Caco-2 (cell line): ENCODE measurements at regions of chr2 and their contacts with region 1.

Region 1: DNA sequence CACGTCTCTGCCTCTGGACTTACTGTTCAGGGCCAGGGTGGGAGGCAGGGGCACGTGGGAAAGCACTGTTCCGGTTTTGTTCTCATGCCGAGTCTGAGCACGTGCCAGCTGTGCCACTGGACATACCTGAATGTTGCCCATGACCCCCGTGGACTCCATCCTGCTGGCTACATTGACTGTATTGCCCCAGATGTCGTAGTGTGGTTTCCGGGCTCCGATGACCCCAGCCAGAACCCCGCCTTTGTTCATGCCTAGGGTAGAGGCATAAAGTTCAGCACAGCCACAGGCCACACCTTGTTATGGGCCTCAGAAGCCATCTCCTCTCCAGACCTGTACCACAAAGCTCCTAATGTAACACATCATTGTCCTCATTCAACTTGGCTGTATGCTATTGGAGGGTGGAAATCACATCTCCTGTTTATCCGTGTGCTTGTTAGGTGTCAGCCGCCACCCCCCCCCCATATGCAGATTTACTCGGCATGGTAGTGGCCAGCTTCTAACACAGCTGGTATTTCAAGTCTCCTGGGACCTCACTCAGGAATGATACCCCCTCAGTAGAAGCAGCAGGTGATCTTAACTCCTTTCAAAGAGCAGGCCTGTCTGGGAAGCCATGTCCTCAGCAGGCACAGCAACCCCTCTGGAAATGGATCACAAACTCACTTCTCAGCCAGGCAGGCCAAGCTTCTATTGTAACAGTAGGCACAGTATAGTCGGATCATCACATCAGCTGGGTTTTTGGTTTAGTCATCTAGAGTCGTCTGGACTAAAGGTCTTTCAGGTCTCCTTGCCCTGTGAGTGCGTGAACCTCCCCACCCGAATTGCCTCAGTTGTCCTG is 27.6 kb downstream of the CENPO start:
- DNase-seq: peak in 1 of 2 experiments; percentile 25
- H3K4me3 ChIP-seq: no peak overlapping the region
- H3K4me3 Mint-ChIP-seq: no peak overlapping the region
- H3K27ac Mint-ChIP-seq: peak overlapping the region; percentile 42
- H3K4me1 ChIP-seq: peaks cover 4% of the 10 kb centered on the region; the same call in 1 of the 2 replicates
- H3K4me1 Mint-ChIP-seq: peaks cover 10% of the 10 kb centered on the region
- H3K27me3 ChIP-seq: no peaks in the 10 kb centered on the region
- H3K27me3 Mint-ChIP-seq: no peaks in the 10 kb centered on the region
- CTCF ChIP-seq: no peak

Region 2: GRCh38 chr2:24754985-24755705 is 65.7 kb before region 1 on chr2:
- CTCF ChIA-PET with region 1: no interaction called
- POLR2A ChIA-PET with region 1: no interaction called
- intact Hi-C with region 1: no loop called
- DNase-seq: no peak
- H3K4me3 ChIP-seq: no peak overlapping the region
- H3K4me3 Mint-ChIP-seq: no peak overlapping the region
- H3K27ac Mint-ChIP-seq: no peak overlapping the region
- H3K4me1 ChIP-seq: no peaks in the 10 kb centered on the region; the same call in 1 of the 2 replicates
- H3K4me1 Mint-ChIP-seq: no peaks in the 10 kb centered on the region
- H3K27me3 ChIP-seq: no peaks in the 10 kb centered on the region
- H3K27me3 Mint-ChIP-seq: no peaks in the 10 kb centered on the region
- CTCF ChIP-seq: no peak

Region 3: GRCh38 chr2:24787532-24787931 is 33.3 kb before region 1 on chr2:
- CTCF ChIA-PET with region 1: interaction called, 30 read pairs
- POLR2A ChIA-PET with region 1: interaction called, 12 read pairs
- intact Hi-C with region 1: no loop called
- DNase-seq: no peak
- H3K4me3 ChIP-seq: no peak overlapping the region
- H3K4me3 Mint-ChIP-seq: no peak overlapping the region
- H3K27ac Mint-ChIP-seq: no peak overlapping the region
- H3K4me1 ChIP-seq: peaks cover 14% of the 10 kb centered on the region
- H3K4me1 Mint-ChIP-seq: peaks cover 5% of the 10 kb centered on the region
- H3K27me3 ChIP-seq: no peaks in the 10 kb centered on the region
- H3K27me3 Mint-ChIP-seq: no peaks in the 10 kb centered on the region
- CTCF ChIP-seq: no peak

Region 4: DNA sequence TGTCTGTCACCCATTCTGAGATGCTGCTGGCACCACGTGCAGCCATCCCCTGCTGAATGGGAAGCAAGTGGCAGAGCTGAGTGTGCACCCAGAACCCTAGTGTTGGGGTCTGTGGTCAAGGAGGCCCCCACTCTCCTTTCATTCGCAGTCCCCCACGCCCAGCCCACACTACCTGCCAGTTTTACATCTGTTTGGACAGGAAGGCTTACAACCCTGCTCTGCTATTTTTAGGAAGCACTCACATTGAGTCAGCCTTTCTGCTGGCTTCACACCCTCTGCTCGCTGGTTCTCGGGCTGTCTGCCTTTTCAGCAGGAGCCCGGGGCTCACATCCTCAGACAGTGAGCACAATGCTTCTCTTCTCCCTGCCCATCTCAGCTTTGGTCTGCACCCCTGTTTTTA is 110.0 kb after region 1 on chr2:
- CTCF ChIA-PET with region 1: no interaction called
- POLR2A ChIA-PET with region 1: no interaction called
- intact Hi-C with region 1: no loop called
- DNase-seq: no peak
- H3K4me3 ChIP-seq: no peak overlapping the region
- H3K4me3 Mint-ChIP-seq: no peak overlapping the region
- H3K27ac Mint-ChIP-seq: no peak overlapping the region
- H3K4me1 ChIP-seq: no peaks in the 10 kb centered on the region
- H3K4me1 Mint-ChIP-seq: no peaks in the 10 kb centered on the region
- H3K27me3 ChIP-seq: no peaks in the 10 kb centered on the region
- H3K27me3 Mint-ChIP-seq: no peaks in the 10 kb centered on the region
- CTCF ChIP-seq: no peak